ENCODE measurements at regions of chr18 and their contacts with region 1.

Region 1: DNA sequence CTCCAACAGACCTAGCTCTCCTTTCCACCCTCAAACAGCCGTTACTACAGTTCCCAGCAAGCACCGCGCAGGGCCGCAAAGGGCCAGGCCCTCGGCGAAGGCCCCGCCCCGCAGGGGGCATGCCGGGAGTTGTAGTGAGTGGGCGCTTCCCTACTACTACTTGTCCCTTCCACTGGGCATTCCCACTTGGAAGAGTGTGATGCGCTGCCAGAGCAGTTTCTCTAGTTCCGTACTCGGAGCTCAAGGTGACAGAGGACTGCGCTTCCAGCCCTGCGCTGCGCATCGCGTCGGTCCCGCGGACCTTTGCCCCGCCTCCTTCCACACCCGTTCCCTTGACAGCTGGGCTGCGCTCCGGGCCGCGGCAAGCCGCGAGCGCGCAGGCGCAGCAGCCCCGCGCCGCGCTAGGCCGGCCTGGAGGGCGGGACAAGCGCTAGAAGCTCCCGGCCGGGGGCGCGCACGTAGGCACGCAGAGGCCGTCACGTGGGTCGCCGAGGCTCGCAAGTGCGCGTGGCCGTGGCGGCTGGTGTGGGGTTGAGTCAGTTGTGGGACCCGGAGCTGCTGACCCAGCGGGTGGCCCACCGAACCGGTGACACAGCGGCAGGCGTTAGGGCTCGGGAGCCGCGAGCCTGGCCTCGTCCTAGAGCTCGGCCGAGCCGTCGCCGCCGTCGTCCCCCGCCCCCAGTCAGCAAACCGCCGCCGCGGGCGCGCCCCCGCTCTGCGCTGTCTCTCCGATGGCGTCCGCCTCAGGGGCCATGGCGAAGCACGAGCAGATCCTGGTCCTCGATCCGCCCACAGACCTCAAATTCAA is at the start of gene VAPA:
- DNase-seq: peak; percentile 97
- CTCF ChIP-seq: no peak

Region 2: DNA sequence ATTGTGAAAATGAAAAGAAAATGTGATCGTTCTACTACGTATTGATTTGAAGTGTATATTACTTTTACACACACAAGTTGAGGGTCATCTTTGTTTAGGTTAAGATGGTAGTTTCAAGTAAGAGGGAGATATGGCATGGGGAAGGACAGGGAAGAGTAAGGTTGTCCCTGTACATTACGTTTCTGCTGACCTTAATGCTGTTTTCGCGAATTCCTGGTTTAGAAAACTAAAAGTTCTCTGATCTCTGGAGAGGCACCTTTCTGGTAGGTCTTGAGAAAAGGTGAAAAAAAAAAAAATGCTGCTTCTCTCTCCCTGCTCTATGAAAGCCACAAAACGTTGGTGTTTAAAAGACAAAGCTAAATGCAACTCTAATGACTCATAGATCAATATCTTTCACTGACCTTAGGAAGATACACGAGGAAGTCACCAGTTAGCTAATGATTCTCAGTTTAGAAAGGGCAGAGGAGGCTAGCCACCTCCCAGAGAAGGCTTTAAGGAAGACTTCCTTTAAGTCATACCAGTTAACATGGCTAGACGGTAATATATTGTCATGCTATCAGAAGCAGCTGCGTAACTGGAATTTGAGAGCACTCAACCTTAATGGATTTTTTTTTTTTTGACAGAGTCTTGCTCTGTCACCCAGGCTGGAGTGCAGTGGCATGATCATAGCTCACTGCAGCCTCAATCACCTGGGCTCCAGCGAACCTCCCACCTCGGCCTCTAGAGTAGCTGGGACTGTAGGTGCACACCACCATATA is 14.8 kb before region 1 on chr18:
- CTCF ChIA-PET with region 1: no interaction called
- POLR2A ChIA-PET with region 1: no interaction called
- DNase-seq: no peak
- CTCF ChIP-seq: no peak

Region 3: DNA sequence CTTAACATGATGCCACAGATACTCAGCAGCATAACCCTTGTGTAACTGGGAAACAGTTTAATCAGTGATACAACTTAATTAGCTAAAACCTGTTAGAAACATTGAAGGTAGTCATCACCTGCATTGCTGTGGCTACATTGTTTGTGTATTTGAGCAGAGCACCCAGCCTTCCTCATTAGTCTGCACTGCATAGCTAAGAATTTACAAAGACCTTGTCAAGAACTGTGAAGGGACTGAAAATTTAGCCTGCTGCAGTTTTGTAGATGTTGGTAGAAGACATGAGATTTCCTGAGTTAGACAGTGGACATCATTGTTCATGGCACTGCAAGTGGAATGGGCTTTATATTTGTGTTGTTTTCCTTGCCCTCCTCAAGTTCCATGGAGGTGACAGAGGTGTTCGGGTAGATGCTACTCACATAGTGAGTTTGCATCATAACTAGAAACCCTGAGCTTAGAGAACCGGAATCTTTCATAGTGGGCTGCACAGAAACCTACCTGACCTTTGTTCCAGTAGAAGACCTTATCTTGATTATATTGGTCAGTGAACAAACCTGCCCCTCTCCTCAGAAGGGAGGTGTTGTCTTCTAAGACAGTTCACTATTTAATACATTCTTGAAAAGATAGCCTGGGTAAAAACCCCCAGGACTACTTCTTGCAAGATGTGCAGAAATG is 12.6 kb after region 1 on chr18:
- CTCF ChIA-PET with region 1: interaction called, 14 read pairs
- POLR2A ChIA-PET with region 1: interaction called, 4 read pairs
- DNase-seq: no peak
- CTCF ChIP-seq: no peak

Region 4: GRCh38 chr18:9951022-9951859 is 37.5 kb after region 1 on chr18:
- CTCF ChIA-PET with region 1: no interaction called
- POLR2A ChIA-PET with region 1: no interaction called
- DNase-seq: peak; percentile 19
- CTCF ChIP-seq: peak; percentile 51

Region 5: GRCh38 chr18:10252952-10253705 is 339.4 kb after region 1 on chr18:
- CTCF ChIA-PET with region 1: no interaction called
- POLR2A ChIA-PET with region 1: no interaction called
- DNase-seq: no peak
- CTCF ChIP-seq: no peak